Activated T-helper 1 cell treated with anti-CD3 and anti-CD28 coated beads, Interleukin-12 subunit alpha, Interleukin-12 subunit beta, Interleukin-2, Interleukin-4 antibody, amounts not matched to agents 30 ng/mL and 10 ng/mL and 1 ng/mL, durations not matched to agents 14 hours and 24 hours and 36 hours (primary cell): ENCODE measurements at regions of chr3 and their contacts with region 1.

Region 1: GRCh38 chr3:149717391-149718056 is 34.8 kb downstream of the COMMD2 start:
- DNase-seq: peak; percentile 2
- H3K4me3 Mint-ChIP-seq: no peak overlapping the region
- H3K27ac Mint-ChIP-seq: no peak overlapping the region
- H3K4me1 Mint-ChIP-seq: no peaks in the 10 kb centered on the region
- H3K27me3 Mint-ChIP-seq: peaks cover 10% of the 10 kb centered on the region

Region 2: GRCh38 chr3:148873270-148873926 is 844.1 kb before region 1 on chr3:
- intact Hi-C with region 1: no loop called
- DNase-seq: no peak
- H3K4me3 Mint-ChIP-seq: no peak overlapping the region
- H3K27ac Mint-ChIP-seq: no peak overlapping the region
- H3K4me1 Mint-ChIP-seq: no peaks in the 10 kb centered on the region
- H3K27me3 Mint-ChIP-seq: peaks cover 5% of the 10 kb centered on the region

Region 3: DNA sequence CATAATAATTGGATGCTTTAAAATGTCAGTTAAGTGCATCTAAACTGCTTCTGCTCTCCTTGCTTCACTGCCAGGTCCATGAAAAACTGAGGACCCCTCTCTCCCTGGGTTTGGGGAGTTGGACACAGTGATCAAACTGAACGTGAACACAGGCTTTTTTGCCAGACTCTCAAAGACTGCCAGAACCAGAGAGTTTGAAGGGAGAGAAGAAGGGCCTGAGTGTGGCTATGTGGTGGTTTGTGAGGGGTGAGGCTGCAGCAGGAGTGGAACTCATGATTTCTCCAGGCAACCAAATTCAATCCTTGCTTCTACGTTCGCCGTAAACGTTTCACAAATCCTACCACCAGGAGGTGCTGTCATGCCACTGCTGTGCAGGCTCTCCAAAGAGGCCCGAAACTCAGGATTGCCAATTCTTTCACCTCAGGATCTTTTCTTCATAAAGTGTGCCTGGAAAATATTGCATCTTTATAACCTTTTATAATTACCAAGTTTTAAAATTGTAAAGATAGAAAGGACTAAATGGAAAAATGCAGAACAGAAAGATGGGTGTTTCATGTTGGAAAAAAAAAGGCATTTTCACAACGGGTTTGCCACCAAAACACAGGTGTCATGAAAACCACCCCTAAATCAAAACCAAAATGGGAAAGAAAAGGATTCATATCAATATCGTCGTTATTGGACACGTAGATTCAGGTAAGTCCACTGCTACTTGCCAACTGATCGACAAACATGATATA is 223.3 kb before region 1 on chr3:
- intact Hi-C with region 1: loop called (anchors 5 kb)
- DNase-seq: peak; percentile 19
- H3K4me3 Mint-ChIP-seq: no peak overlapping the region
- H3K27ac Mint-ChIP-seq: no peak overlapping the region
- H3K4me1 Mint-ChIP-seq: no peaks in the 10 kb centered on the region
- H3K27me3 Mint-ChIP-seq: peaks cover 22% of the 10 kb centered on the region

Region 4: GRCh38 chr3:149512209-149512782 is 205.2 kb before region 1 on chr3:
- intact Hi-C with region 1: loop called (anchors 1 kb)
- DNase-seq: no peak
- H3K4me3 Mint-ChIP-seq: no peak overlapping the region
- H3K27ac Mint-ChIP-seq: no peak overlapping the region
- H3K4me1 Mint-ChIP-seq: peaks cover 10% of the 10 kb centered on the region
- H3K27me3 Mint-ChIP-seq: peaks cover 24% of the 10 kb centered on the region

Region 5: DNA sequence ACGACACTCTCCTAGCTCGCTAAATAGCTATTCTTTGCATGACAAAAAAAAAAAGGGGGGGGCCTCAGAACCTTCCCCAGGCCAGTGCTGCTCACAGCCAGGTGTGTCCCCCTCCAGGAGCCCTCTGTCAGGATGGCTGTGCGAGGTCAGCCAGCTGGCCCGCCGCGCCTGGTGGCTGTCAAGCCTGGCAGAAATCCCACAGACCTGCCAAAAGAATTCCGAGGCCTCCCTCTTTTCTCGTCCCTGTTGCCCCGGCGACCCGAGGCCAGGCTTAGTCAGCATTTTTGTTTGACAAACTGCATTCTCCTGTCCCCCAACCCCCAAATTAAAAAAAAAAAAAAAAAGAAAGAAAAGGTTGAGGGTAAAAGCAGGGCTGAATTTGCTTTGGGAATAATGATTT is 181.1 kb before region 1 on chr3:
- intact Hi-C with region 1: loop called (anchors 1 kb)
- DNase-seq: no peak
- H3K4me3 Mint-ChIP-seq: no peak overlapping the region
- H3K27ac Mint-ChIP-seq: no peak overlapping the region
- H3K4me1 Mint-ChIP-seq: peaks cover 11% of the 10 kb centered on the region
- H3K27me3 Mint-ChIP-seq: peaks cover 8% of the 10 kb centered on the region

Region 6: GRCh38 chr3:149621218-149622005 is 96.1 kb before region 1 on chr3:
- intact Hi-C with region 1: loop called (anchors 1 kb)
- DNase-seq: no peak
- H3K4me3 Mint-ChIP-seq: no peak overlapping the region
- H3K27ac Mint-ChIP-seq: peak overlapping the region; percentile 2
- H3K4me1 Mint-ChIP-seq: peaks cover 31% of the 10 kb centered on the region
- H3K27me3 Mint-ChIP-seq: peaks cover 10% of the 10 kb centered on the region

Region 7: GRCh38 chr3:149657926-149658733 is 59.4 kb before region 1 on chr3 and contains the start of gene WWTR1:
- intact Hi-C with region 1: loop called (anchors 5 kb)
- DNase-seq: peak; percentile 34
- H3K4me3 Mint-ChIP-seq: peak within 1 kb of the TSS; percentile 84
- H3K27ac Mint-ChIP-seq: peak within 1 kb of the TSS; percentile 45
- H3K4me1 Mint-ChIP-seq: peaks cover 19% of the 10 kb centered on the region
- H3K27me3 Mint-ChIP-seq: peaks cover 50% of the 10 kb centered on the region
- total RNA-seq, gene WWTR1: 0.57 and 0.81 TPM in 2 replicates

Region 8: GRCh38 chr3:149790268-149790667 is 72.7 kb after region 1 on chr3:
- intact Hi-C with region 1: no loop called
- DNase-seq: no peak
- H3K4me3 Mint-ChIP-seq: no peak overlapping the region
- H3K27ac Mint-ChIP-seq: no peak overlapping the region
- H3K4me1 Mint-ChIP-seq: no peaks in the 10 kb centered on the region
- H3K27me3 Mint-ChIP-seq: peaks cover 21% of the 10 kb centered on the region

Region 9: GRCh38 chr3:149902498-149903139 is 185.1 kb after region 1 on chr3:
- intact Hi-C with region 1: no loop called
- DNase-seq: no peak
- H3K4me3 Mint-ChIP-seq: no peak overlapping the region
- H3K27ac Mint-ChIP-seq: no peak overlapping the region
- H3K4me1 Mint-ChIP-seq: peaks cover 6% of the 10 kb centered on the region
- H3K27me3 Mint-ChIP-seq: no peaks in the 10 kb centered on the region